ENCODE measurements at regions of chr4 and their contacts with region 1.

Region 1: DNA sequence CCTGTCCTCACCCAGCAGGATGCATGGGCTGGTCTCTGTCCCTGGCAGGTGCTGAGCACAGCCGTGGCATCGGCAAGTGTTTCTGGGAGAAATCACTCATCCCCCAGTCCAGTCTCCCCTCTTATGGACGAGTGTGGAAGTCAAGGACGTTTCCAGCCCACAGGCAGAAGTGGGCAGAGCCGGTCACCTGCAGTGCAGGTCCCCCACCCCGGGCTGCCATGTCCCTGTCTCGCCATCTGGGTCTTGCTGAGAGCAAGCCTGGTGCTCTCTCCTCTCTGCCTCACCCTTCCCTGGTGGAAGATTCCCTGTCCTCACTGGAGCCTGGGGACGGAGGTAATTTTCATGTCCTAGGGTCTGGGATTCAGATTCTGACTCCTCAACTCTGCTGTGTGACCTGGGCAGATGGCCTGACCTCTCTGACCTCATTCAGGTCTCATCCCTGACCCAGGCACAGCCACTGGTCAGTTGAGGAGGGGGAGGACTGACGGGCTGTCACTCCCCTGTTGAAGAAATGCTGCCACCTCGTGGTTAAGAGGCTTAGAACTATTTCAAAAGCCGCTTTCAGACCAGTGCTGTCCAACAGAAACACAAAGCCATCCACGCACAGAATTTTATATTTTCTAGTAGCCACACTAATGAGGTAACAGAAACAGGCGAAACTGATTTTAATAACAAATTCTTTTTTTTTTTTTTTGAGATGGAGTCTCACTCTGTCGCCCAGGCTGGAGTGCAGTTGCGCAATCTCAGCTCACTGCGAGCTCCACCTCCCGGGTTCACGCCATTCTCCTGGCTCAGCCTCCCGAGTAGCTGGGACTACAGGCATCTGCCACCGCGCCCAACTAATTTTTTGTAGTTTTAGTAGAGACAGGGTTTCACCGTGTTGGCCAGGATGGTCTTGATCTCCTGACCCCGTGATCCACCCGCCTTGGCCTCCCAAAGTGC is 1.8 kb downstream of the CPZ start:
- DNase-seq: peak; percentile 70
- ATAC-seq: peak; percentile 35
- H3K4me3 Mint-ChIP-seq: peak overlapping the region; percentile 62
- H3K27ac Mint-ChIP-seq: no peak overlapping the region
- H3K4me1 Mint-ChIP-seq: peaks cover 27% of the 10 kb centered on the region
- H3K27me3 Mint-ChIP-seq: no peaks in the 10 kb centered on the region; the same call in 1 of the 2 replicates
- CTCF ChIP-seq: peak; percentile 32; the same call in 1 of the 2 replicates

Region 2: DNA sequence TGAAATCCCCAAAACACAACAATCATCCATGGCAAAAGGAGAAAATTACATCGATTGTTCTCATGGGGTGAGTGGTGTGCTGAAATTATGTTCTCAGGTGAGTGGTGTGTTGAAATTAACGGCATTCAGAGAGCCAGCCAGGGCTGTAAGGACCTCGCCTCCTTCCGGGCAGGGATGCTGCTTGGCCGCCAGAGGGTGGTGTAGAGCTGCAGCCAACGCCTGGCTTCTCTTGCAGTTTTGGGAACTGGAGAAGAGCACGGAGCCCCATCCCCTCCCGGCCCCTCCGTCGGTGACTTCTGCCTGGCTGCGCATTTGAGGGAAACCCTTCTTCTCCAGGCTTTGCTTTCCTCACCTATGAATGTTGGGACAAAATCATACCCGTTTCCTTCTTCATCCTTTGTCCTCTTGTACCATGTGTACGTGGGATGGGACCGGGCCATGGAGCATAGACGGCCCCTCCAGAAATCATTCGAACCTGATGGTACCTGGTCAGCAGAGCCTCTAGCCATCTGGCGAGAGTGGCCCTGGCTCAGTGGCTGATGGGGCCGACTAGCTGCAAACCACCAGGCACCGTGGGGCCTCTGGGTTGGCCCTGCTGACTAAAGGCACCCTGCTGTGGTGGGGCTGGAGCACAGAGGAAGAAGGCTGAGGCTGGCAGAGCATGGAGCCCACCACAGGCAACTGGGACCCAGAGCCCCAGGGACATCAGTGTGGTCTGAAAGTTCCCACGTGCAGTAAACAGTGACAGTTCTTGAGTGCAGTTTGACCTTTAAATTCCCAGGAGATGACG is 125.4 kb before region 1 on chr4:
- CTCF ChIA-PET with region 1: interaction called, 11 read pairs
- POLR2A ChIA-PET with region 1: no interaction called
- DNase-seq: peak; percentile 89
- ATAC-seq: peak; percentile 94
- H3K4me3 Mint-ChIP-seq: no peak overlapping the region
- H3K27ac Mint-ChIP-seq: 0 out of 2 replicates have a peak overlapping the region, but pooled peaks have one; percentile 24
- H3K4me1 Mint-ChIP-seq: 0 out of 2 replicates have a peak, but pooled peaks cover 2% of the 10 kb centered on the region
- H3K27me3 Mint-ChIP-seq: no peaks in the 10 kb centered on the region
- CTCF ChIP-seq: peak; percentile 76

Region 3: DNA sequence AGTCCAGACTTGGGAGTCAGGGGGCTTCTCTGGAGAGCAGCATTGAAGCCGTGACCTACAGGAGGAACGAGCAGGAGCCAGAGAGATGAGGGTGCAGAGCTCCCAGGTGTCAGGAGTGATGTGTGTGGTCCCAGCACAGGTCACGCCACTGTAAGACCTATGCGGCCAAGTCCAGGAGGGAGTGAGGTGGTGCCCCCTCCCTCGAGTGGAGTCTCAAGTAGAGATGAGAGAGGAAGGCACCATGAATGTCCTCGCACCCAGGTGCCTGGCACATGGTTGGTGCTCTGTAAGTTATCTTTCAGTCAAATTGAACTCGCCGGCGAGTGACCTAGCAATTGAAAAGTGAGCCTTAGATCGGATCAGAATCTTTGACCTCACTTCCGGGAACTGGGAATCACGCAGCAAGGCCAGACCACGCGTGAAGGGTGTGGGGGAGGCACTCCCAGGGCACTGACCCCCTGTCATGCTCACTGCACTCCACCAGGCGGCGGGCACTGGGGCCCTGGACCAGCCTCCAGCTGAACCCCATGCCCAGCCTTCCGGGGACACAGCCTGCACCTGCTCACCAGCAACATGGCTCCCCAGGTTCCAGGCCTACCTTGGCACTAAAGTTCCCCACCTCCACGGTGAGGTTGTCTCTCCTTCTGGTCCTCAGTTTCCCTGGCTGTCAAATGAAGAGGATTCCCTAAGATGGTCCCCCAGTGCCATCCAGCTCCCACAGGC is 149.9 kb after region 1 on chr4:
- CTCF ChIA-PET with region 1: no interaction called
- POLR2A ChIA-PET with region 1: no interaction called
- DNase-seq: peak; percentile 38
- ATAC-seq: peak; percentile 55
- H3K4me3 Mint-ChIP-seq: no peak overlapping the region
- H3K27ac Mint-ChIP-seq: no peak overlapping the region
- H3K4me1 Mint-ChIP-seq: peaks cover 6% of the 10 kb centered on the region
- H3K27me3 Mint-ChIP-seq: no peaks in the 10 kb centered on the region
- CTCF ChIP-seq: no peak